Activated T-helper 1 cell treated with anti-CD3 and anti-CD28 coated beads, Interleukin-12 subunit alpha, Interleukin-12 subunit beta, Interleukin-2, Interleukin-4 antibody, amounts not matched to agents 30 ng/mL and 10 ng/mL and 1 ng/mL, durations not matched to agents 14 hours and 24 hours and 36 hours (primary cell): ENCODE measurements at regions of chr5 and their contacts with region 1.

Region 1: DNA sequence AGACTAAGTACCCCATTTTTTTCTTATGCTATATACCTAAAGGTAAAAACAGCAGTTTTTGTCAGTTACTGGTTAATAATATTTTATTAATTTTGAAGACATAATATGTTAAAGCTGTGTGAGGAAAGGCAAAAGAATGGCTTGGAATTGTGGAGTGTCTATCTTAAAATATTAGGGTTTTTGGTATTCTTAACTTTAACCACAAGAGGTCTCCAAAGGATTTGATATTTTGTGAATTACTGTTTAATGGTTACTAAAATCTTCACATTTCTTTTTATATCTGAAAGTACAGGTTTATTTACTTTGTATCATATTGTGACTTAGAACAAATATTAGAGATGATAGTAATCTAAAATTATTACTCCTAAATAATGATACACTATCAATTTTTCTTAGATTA is 32.0 kb upstream of the DHFR start:
- DNase-seq: no peak
- H3K4me3 Mint-ChIP-seq: no peak overlapping the region
- H3K27ac Mint-ChIP-seq: no peak overlapping the region
- H3K4me1 Mint-ChIP-seq: peaks cover 34% of the 10 kb centered on the region
- H3K27me3 Mint-ChIP-seq: no peaks in the 10 kb centered on the region

Region 2: DNA sequence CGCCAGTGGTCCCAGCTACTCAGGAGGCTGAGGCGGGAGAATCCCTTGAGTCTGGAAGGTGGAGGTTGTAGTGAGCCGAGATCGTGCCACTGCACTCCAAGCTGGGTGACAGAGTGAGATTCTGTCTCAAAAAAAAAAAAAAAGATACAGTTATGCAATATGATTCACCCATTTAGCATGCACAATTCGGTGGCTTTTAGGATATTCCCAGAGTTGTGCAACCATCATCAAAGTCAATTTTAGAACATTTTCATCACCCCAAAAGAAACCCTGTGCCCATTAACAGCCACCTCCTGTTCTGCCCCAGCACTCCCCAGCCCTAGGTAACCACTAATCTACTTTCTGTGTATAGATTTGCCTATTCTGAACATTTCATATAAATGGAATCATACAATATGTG is 27.7 kb before region 1 on chr5:
- intact Hi-C with region 1: no loop called
- DNase-seq: no peak
- H3K4me3 Mint-ChIP-seq: no peak overlapping the region
- H3K27ac Mint-ChIP-seq: no peak overlapping the region
- H3K4me1 Mint-ChIP-seq: peaks cover 28% of the 10 kb centered on the region
- H3K27me3 Mint-ChIP-seq: no peaks in the 10 kb centered on the region

Region 3: GRCh38 chr5:80935811-80936385 is 249.1 kb after region 1 on chr5:
- intact Hi-C with region 1: loop called (anchors 5 kb)
- DNase-seq: no peak
- H3K4me3 Mint-ChIP-seq: no peak overlapping the region
- H3K27ac Mint-ChIP-seq: no peak overlapping the region
- H3K4me1 Mint-ChIP-seq: peaks cover 6% of the 10 kb centered on the region
- H3K27me3 Mint-ChIP-seq: peaks cover 2% of the 10 kb centered on the region

Region 4: GRCh38 chr5:81105261-81105877 is 418.6 kb after region 1 on chr5:
- intact Hi-C with region 1: loop called (anchors 1 kb)
- DNase-seq: no peak
- H3K4me3 Mint-ChIP-seq: peak overlapping the region; percentile 15
- H3K27ac Mint-ChIP-seq: no peak overlapping the region
- H3K4me1 Mint-ChIP-seq: peaks cover 32% of the 10 kb centered on the region
- H3K27me3 Mint-ChIP-seq: no peaks in the 10 kb centered on the region